Mammary epithelial cell (primary cell): ENCODE measurements at regions of chr14 and their contacts with region 1.

Region 1: DNA sequence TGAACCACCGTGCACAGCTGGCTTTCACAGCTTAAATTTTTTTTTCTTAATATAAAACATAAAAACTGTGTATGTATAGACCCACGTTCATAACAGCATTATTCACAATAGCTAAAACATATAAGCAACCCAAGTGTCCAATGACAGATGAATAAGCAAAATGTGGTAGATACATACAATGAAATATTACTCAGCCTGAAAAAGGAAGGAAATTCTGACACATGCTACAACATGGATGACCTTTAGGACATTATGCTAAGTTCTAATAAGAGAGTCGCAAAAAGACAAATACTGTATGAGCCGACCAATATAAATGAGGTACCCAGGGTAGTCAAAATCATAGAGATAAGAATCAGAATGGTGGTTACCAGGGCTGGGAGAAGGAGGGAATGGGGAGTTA is 13.8 kb upstream of the YY1 start:
- DNase-seq: no peak
- H3K4me3 ChIP-seq: no peak overlapping the region
- H3K27ac ChIP-seq: no peak overlapping the region
- H3K4me1 ChIP-seq: peaks cover 6% of the 10 kb centered on the region
- H3K27me3 ChIP-seq: no peaks in the 10 kb centered on the region
- CTCF ChIP-seq: no peak

Region 2: DNA sequence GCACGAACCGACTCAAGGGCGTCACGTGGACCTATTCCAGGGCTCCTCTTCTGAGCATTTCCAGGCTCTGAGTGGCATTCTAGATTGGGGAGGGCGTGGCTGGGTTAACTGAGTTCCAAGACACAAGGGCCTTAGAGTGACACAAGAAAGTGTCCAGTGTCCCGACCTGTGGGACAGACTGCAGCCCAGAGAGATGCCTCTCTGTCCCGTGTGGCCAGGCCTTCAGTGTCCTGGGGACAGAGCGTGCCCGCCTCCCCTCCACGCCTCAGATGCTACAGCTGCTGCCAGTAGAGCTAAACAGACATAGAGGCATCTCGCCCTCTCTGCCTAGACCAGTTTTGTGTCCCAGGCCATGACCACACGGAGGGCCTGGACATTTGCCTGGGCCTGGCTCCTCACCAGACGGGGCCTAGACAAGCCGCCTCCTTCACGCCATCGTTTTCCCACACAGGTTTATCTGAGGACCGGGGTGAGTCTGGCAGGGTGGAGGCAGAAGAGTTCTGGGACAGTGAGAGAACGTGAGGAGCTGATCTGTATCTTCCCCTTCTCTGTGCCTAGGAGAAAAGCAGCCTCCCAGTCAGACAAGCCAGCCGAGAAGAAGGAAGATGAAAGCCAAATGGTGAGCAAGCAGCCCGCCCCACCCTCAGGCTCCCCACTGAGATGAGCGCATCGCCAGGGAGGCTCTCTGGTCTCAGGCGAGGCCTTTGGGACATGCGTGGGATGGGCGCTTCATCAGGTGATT is 92.8 kb before region 1 on chr14:
- CTCF ChIA-PET with region 1: no interaction called
- dilution Hi-C with region 1: loop called (anchors 5 kb)
- in situ Hi-C with region 1: no loop called
- intact Hi-C with region 1: no loop called
- DNase-seq: no peak
- H3K4me3 ChIP-seq: no peak overlapping the region
- H3K27ac ChIP-seq: no peak overlapping the region
- H3K4me1 ChIP-seq: no peaks in the 10 kb centered on the region
- H3K27me3 ChIP-seq: no peaks in the 10 kb centered on the region
- CTCF ChIP-seq: no peak

Region 3: GRCh38 chr14:100285021-100285912 is 60.1 kb after region 1 on chr14:
- CTCF ChIA-PET with region 1: no interaction called
- dilution Hi-C with region 1: loop called (anchors 5 kb)
- in situ Hi-C with region 1: no loop called
- intact Hi-C with region 1: no loop called
- DNase-seq: peak; percentile 50
- H3K4me3 ChIP-seq: peak overlapping the region; percentile 68 to 89 (median 74)
- H3K27ac ChIP-seq: peak overlapping the region; percentile 53
- H3K4me1 ChIP-seq: peaks cover 42% of the 10 kb centered on the region
- H3K27me3 ChIP-seq: no peaks in the 10 kb centered on the region
- CTCF ChIP-seq: peak; percentile 53 to 92

Region 4: GRCh38 chr14:101183376-101184103 is 958.4 kb after region 1 on chr14:
- CTCF ChIA-PET with region 1: no interaction called
- dilution Hi-C with region 1: no loop called
- in situ Hi-C with region 1: no loop called
- intact Hi-C with region 1: no loop called
- DNase-seq: no peak
- H3K4me3 ChIP-seq: no peak overlapping the region
- H3K27ac ChIP-seq: no peak overlapping the region
- H3K4me1 ChIP-seq: no peaks in the 10 kb centered on the region
- H3K27me3 ChIP-seq: no peaks in the 10 kb centered on the region
- CTCF ChIP-seq: peak in 1 of 2 donors; percentile 26